Right ventricle myocardium inferior (tissue), 1 donor: ENCODE measurements at regions of chr3 and their contacts with region 1.

Region 1: DNA sequence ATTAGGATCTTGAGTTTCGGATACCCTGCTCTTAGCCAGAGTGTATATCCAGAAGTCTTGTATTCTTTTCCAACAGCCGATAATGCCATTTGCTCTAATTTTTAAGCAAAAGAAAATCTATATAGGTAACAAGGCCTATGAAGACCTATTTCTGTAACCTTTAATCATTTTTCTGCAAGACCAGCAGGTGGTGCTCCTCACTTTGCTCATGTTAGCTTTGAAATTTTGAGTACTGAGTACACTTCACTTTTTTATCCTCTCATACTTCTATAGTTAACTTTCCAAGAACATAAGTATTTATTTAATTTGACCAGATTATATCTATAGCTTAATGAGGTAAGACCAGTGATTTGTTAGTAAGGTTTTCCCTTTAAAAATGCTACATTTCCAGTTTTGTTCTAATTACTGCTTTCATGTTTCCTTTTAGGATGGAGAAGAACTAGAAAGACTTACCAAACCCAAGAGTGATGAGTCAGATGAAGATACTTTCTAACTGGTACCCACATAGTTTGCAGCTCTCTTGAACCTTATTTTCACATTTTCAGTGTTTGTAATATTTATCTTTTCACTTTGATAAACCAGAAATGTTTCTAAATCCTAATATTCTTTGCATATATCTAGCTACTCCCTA is 20.5 kb downstream of the SLC35A5 start:
- DNase-seq: no peak
- ATAC-seq: no peak

Region 2: DNA sequence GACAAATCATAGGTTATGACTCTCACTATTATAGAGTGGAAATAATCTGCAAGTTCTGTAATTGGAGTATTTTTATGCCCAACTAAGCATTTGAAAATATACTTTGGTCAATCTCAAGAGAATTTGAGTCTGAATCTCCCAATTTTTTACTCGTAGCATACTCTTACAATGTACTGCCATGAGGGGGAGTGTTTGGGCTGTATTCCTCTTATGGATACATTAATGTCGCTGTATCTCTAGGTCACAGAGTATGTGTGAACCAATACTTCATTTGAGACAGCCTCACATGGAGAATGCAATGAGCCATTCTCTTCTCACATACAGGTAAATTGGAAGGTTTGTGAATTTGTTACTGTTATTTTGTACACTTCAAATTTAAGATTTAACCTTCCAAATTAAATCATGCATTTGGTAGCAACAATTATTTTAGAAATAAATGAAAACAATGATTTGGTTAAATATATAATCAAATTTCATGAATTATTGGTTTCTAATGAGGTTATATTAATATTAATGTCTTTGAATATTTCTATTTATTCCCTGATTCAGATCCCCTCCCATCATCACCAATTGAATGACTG is 254.9 kb before region 1 on chr3:
- intact Hi-C with region 1: no loop called
- DNase-seq: no peak
- ATAC-seq: peak; percentile 78

Region 3: GRCh38 chr3:112531358-112531781 is 51.0 kb before region 1 on chr3:
- intact Hi-C with region 1: no loop called
- DNase-seq: no peak
- ATAC-seq: no peak

Region 4: DNA sequence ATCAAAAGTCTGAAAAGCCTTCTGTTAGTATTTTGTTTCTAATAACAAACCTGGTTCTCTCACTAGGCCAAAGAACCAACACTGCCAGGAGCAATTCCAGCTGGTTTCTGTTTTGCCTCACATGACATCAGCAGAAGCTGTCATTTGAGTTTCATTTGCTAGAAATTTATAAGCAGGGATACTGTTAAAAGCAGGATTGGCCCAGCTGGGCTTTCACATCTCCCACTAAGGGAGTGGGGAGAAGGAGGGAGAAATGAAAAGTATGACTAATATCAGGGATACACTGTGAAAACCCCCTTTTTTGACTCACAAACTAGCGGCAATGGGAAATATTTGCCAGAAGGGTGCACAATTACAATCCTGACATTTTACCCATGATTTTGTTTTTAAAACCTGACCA is 53.3 kb after region 1 on chr3:
- intact Hi-C with region 1: loop called (anchors 5 kb)
- DNase-seq: no peak
- ATAC-seq: peak; percentile 73

Region 5: DNA sequence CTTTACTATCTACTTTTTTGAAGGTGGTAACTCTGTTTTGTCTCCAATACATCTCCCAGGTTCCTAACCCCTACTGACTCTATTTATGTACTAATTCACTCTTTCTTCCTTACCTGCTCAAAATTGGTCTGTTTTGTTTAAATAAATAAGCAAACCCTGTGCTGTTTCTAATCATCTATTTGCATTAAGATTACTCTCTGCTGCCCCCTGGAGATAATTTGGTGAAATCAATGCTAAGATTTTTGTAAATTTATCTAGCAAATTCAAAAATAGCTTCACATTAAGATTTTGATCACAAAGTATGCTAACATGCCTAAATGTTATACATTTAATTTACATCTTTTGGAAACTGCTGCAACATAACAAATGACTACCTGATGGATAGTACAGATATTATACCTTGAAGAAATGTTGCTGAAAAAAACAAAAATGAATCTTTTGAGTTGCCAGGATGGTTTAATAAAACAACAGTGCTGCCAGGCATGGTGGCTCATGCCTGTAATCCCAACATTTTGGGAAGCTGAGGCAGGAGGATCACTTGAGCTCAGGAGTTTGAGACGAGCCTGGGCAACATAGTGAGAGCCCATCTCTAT is 397.0 kb after region 1 on chr3:
- intact Hi-C with region 1: loop called (anchors 2 kb)
- DNase-seq: no peak
- ATAC-seq: no peak